ENCODE measurements at regions of chr9 and their contacts with region 1.

Region 1: DNA sequence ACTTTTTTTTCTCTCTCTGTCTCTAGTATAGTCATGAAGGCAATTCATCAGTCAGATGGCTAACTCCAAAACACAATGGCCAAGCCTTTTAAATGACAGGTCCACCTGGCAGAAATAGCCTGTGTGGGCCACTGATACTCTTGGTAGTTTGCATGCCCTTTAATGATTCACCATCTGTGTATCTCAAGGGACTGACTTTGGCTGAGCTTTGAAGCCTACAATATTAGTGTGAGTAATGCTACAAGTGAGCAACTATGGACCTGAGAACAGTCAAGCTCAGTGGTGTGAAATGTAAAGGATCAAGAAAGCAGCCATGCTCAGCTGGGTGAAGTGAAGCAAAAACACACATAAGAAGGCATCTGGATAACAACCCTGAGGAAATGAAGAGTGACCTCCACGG is 506.9 kb downstream of the TLE1 start:
- DNase-seq: no peak
- ATAC-seq: no peak
- H3K4me3 ChIP-seq: no peak overlapping the region
- H3K27ac ChIP-seq: no peak overlapping the region
- H3K4me1 ChIP-seq: no peaks in the 10 kb centered on the region
- H3K27me3 ChIP-seq: no peaks in the 10 kb centered on the region

Region 2: DNA sequence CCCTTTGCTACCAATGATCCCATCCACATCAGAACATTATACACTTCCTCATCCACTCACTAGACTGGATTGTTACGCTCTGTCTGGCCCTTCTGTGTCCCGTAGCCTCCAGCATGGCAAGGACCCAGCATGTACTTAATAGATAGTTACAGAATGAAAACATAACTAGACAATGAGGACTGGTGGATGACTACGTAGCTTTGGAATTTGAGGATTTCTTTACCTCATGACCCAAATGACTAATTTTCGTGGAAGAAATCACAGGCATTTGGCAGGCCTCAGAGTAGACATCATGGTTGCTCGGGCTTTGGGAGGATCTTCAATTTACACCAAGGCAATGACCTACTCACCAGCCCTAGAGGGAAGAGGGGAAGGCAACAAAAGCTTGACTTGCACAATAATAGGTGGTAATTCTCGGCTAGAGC is 207.2 kb after region 1 on chr9:
- intact Hi-C with region 1: no loop called
- DNase-seq: peak in 2 of 3 donors; percentile 47 to 56
- ATAC-seq: peak; percentile 54 to 81
- H3K4me3 ChIP-seq: no peak overlapping the region
- H3K27ac ChIP-seq: no peak overlapping the region
- H3K4me1 ChIP-seq: peaks cover 8% of the 10 kb centered on the region
- H3K27me3 ChIP-seq: no peaks in the 10 kb centered on the region

Region 3: GRCh38 chr9:82320566-82320965 is 1138.1 kb after region 1 on chr9:
- intact Hi-C with region 1: loop called in 1 of 4 experiments (anchors 10 kb)
- DNase-seq: no peak
- ATAC-seq: no peak
- H3K4me3 ChIP-seq: no peak overlapping the region
- H3K27ac ChIP-seq: no peak overlapping the region
- H3K4me1 ChIP-seq: no peaks in the 10 kb centered on the region
- H3K27me3 ChIP-seq: no peaks in the 10 kb centered on the region

Measured in right cardiac atrium (tissue), 5 donors.